Activated T-helper 1 cell treated with anti-CD3 and anti-CD28 coated beads, Interleukin-12 subunit alpha, Interleukin-12 subunit beta, Interleukin-2, Interleukin-4 antibody, amounts not matched to agents 30 ng/mL and 10 ng/mL and 1 ng/mL, durations not matched to agents 14 hours and 24 hours and 36 hours (primary cell): ENCODE measurements at regions of chr13 and their contacts with region 1.

Region 1: GRCh38 chr13:74133657-74134201 is 475 bp downstream of the KLF12 start:
- DNase-seq: peak; percentile 76
- H3K4me3 Mint-ChIP-seq: peak overlapping the region; percentile 95
- H3K27ac Mint-ChIP-seq: peak overlapping the region; percentile 99
- H3K4me1 Mint-ChIP-seq: peaks cover 49% of the 10 kb centered on the region
- H3K27me3 Mint-ChIP-seq: peaks cover 3% of the 10 kb centered on the region

Region 2: DNA sequence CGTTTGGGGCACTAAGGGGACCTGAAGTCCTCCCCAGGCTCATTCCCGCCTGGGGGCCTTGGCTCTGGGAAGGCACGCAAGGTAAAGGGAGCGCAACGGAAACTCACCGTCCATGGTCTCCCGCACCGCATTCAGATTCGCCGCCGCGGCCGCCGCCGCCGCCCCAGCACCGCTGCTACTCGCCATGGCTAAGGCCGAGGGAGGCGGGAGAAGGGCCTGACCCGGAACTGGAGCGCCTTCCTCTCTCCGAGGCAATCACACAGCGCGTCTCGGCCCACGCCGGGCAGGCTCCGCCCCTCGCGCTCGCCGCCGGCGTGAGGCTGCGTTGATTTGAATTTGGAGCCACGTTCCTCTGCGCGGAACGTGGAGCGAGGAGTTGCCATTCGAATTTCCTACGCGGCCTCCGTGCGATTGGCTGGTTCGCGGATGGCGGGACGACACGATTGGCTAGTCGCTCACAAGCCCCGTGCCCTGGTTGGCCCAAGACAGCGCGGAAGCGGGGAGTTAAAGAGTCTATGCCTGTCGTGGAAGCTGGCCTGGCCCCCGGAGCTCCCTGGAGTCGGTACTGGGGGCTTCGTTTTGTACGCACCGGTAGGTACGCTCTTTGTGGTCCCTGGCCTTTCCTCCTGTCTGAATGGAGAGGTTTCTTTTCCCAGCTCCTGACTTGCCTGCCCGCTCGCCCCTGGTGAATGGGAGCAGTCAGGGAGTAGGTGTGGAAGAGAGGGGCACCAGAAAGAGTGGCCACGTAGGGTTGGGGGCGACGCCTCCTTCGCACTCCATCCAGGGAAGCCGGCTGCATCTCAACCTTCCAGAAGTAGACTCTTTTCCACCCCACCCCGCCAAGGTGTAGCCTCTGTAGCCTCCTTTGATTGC is 1406.1 kb before region 1 on chr13 and contains the starts of genes BORA and MZT1:
- intact Hi-C with region 1: loop called (anchors 2 kb)
- DNase-seq: peak; percentile 97
- H3K4me3 Mint-ChIP-seq: peak within 1 kb of the TSS; percentile 99
- H3K27ac Mint-ChIP-seq: peak within 1 kb of the TSS; percentile 97
- H3K4me1 Mint-ChIP-seq: peaks cover 70% of the 10 kb centered on the region
- H3K27me3 Mint-ChIP-seq: no peaks in the 10 kb centered on the region
- total RNA-seq, gene BORA: 14.6 and 19.4 TPM in 2 replicates
- total RNA-seq, gene MZT1: 21.2 and 22.8 TPM in 2 replicates

Region 3: GRCh38 chr13:73715114-73715910 is 418.4 kb before region 1 on chr13:
- intact Hi-C with region 1: loop called (anchors 1 kb)
- DNase-seq: peak; percentile 61
- H3K4me3 Mint-ChIP-seq: peak overlapping the region; percentile 55
- H3K27ac Mint-ChIP-seq: peak overlapping the region; percentile 81
- H3K4me1 Mint-ChIP-seq: peaks cover 47% of the 10 kb centered on the region
- H3K27me3 Mint-ChIP-seq: no peaks in the 10 kb centered on the region

Region 4: GRCh38 chr13:73924607-73925006 is 209.1 kb before region 1 on chr13:
- intact Hi-C with region 1: loop called (anchors 2 kb)
- DNase-seq: no peak
- H3K4me3 Mint-ChIP-seq: no peak overlapping the region
- H3K27ac Mint-ChIP-seq: no peak overlapping the region
- H3K4me1 Mint-ChIP-seq: peaks cover 25% of the 10 kb centered on the region
- H3K27me3 Mint-ChIP-seq: no peaks in the 10 kb centered on the region

Region 5: DNA sequence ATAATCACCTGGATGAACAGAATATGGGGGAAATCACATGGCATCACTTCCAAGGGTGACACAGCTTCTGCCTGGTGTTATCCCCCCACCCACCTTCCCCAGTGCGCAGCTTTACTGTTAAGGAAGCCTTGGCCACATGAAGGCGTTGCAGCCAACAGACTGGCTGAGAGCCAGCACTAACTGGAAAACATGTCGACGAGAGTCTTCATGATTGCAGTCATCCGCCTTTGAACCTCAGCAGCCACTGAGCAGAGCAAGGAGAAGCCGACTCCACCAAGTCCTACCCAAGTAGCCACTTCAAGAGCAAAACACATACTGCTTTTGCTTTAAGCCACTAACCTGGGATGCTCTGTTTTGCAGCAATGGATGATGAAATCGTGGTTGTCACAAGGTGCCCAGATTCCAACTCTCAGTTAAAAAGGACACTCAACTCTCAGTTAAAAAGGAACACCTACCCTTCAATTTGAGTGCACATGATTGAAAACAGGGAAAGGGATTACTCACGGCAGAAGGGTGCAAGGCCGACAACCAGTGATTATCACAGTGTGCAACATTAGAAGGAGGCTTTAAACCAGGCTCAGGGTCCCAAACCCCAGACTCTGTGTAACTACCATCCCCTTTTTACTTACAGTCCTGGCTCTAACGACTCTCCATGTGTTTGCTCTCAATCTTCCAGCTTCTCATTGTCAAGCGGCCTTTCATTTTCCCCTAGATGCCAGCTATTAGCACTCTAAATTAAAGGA is 148.6 kb before region 1 on chr13:
- intact Hi-C with region 1: loop called (anchors 1 kb)
- DNase-seq: peak; percentile 48
- H3K4me3 Mint-ChIP-seq: peak overlapping the region; percentile 69
- H3K27ac Mint-ChIP-seq: peak overlapping the region; percentile 79
- H3K4me1 Mint-ChIP-seq: peaks cover 36% of the 10 kb centered on the region
- H3K27me3 Mint-ChIP-seq: no peaks in the 10 kb centered on the region

Region 6: GRCh38 chr13:74070065-74070464 is 63.7 kb before region 1 on chr13:
- intact Hi-C with region 1: no loop called
- DNase-seq: peak; percentile 17
- H3K4me3 Mint-ChIP-seq: peak overlapping the region; percentile 15
- H3K27ac Mint-ChIP-seq: peak overlapping the region; percentile 32
- H3K4me1 Mint-ChIP-seq: peaks cover 32% of the 10 kb centered on the region
- H3K27me3 Mint-ChIP-seq: no peaks in the 10 kb centered on the region

Region 7: DNA sequence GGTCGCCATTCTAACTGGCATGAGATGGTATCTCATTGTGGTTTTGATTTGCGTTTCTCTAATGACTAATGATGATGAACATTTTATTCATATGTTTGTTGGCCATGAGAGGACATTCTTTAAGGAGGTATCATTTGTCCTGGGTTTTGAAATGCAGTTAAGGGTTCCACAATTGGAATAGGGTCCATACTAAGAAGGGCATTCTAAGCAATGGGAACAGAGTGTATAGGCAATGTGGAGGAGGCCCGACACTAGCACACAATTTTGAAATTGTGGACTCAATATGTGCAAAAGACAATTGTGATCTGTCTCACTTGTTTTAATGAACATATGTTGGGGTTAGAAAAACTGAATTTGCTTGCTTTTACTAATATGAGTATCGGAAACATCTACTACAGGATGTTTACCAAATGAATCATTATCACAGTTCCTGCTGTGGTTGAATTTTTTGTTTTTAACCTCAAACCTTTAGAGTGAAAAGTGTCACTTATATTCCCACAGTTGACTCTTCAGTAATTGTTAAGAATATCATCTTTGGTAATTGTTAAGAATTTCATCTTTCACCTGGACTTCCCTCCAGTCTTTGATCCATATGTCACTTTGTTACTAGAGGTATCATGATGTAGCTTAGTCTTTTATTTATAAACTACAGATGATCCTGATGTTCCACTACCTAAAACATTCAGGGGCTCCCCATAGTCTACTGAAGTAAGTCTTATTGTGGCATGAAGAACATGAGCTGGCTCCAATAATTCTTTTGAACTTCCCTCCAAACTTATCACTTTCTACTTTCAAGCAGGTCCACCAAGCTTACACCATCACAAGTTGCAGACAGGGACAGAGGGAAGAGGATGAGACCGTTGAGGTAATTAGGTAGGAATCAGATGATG is 110.2 kb after region 1 on chr13:
- intact Hi-C with region 1: loop called (anchors 1 kb)
- DNase-seq: no peak
- H3K4me3 Mint-ChIP-seq: peak overlapping the region; percentile 60
- H3K27ac Mint-ChIP-seq: peak overlapping the region; percentile 82
- H3K4me1 Mint-ChIP-seq: peaks cover 32% of the 10 kb centered on the region
- H3K27me3 Mint-ChIP-seq: peaks cover 2% of the 10 kb centered on the region

Region 8: DNA sequence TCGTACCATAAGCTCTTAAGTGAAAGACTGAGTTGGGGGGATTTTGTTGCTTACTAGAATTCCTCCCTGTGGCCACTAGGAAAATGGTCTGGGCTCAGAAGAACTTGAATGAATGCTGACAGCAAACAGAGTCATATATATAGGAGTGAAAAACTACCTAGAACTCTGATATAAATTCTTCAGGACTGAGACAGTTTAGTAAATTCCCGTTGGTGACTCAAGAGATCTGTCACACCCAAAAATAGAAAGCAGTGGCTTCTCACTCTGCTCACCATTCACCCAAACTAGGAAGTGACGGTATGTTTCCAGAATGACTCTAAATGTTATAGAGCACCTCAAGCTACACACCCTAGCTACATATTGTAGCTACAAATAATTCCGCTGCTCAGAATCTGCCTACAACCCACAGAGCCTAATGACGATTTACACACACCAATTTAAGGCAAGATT is 1232.0 kb after region 1 on chr13:
- intact Hi-C with region 1: loop called (anchors 5 kb)
- DNase-seq: peak; percentile 43
- H3K4me3 Mint-ChIP-seq: peak overlapping the region; percentile 65
- H3K27ac Mint-ChIP-seq: peak overlapping the region; percentile 96
- H3K4me1 Mint-ChIP-seq: peaks cover 57% of the 10 kb centered on the region
- H3K27me3 Mint-ChIP-seq: no peaks in the 10 kb centered on the region

Region 9: DNA sequence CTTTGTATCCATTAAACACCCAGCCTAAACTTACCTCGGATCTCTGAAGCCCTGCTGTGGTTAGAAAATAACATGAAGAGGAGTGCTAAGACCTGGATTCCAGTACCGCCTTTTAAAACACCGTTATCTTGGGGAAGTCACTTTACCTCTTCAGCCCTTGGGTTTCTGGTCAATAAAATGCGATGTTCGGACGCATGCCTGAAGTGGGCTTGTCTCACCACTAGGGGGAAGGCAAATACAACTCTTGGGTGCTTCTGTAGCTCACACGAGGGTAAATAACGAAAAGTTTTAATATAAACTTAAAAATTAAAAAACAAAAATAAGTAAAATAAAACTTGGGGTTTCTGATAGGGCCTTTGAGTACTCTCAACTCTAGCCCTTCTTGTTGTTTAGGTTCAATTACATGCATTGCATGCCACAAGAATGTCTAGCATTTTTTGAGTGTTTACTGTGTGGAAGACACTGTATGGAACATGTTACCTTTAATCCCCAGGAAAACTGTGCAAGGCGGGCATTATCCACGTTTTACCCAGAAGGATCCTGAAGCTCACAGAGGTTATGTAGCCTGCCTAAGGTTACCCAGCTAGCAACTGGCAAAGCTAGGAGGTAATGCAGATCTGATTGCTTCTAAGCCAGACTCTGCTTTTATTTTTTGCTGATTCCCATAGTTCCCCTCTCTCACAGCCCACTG is 1742.8 kb after region 1 on chr13:
- intact Hi-C with region 1: no loop called
- DNase-seq: peak; percentile 27
- H3K4me3 Mint-ChIP-seq: no peak overlapping the region
- H3K27ac Mint-ChIP-seq: no peak overlapping the region
- H3K4me1 Mint-ChIP-seq: peaks cover 17% of the 10 kb centered on the region
- H3K27me3 Mint-ChIP-seq: peaks cover 8% of the 10 kb centered on the region